ENCODE measurements at regions of chr12 and their contacts with region 1.

Region 1: DNA sequence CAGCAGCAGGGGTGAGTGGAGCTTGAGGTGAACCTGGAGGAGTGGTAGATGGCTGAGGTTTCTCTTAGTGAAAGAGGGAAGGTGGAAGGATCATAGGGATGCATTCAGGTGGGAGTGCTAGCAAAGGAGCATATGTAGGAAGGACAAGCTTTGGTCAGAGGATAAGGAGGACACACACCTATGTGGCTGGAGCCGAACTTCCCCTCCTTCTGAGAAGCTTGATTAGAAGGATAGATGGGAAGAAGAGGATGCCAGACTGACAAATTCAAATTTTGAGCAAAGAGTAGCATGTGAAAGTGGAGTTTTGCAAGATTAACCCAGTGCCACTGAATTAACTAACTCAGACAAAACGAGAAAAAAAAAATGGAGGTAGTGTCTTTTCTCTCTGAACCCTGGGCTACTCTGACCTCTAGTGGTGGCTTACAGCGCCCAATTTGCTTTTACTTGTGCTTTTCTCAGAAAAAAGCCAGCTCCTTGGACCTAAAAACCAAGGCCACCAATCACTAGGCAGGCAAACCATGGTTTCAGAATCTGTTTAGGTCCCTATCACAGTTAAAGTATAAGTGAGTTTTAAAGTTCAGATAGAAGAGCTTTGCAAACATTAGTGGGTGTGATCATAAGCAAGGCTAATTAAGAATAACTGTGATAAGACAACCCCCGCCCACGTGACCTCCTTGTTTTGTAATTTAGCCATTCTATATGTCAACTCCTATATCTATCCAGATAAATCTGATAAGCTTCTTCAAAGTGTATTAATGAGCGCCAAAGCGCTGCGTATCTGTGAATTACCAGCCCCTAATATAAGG is 15.5 kb downstream of the EMP1 start:
- DNase-seq: peak; percentile 84
- ATAC-seq: peak; percentile 72
- H3K4me3 Mint-ChIP-seq: no peak overlapping the region
- H3K27ac Mint-ChIP-seq: peak overlapping the region; percentile 60
- H3K4me1 Mint-ChIP-seq: peaks cover 55% of the 10 kb centered on the region
- H3K27me3 Mint-ChIP-seq: no peaks in the 10 kb centered on the region

Region 2: GRCh38 chr12:13044002-13044905 is 167.8 kb before region 1 on chr12 and contains the start of gene FAM234B:
- CTCF ChIA-PET with region 1: interaction called, 15 read pairs
- DNase-seq: peak; percentile 76
- ATAC-seq: peak; percentile 98
- H3K4me3 Mint-ChIP-seq: peak within 1 kb of the TSS; percentile 80
- H3K27ac Mint-ChIP-seq: peak within 1 kb of the TSS; percentile 31
- H3K4me1 Mint-ChIP-seq: peaks cover 23% of the 10 kb centered on the region
- H3K27me3 Mint-ChIP-seq: peaks cover 29% of the 10 kb centered on the region
- total RNA-seq, gene FAM234B: 4.7 to 5.0 TPM

Region 3: DNA sequence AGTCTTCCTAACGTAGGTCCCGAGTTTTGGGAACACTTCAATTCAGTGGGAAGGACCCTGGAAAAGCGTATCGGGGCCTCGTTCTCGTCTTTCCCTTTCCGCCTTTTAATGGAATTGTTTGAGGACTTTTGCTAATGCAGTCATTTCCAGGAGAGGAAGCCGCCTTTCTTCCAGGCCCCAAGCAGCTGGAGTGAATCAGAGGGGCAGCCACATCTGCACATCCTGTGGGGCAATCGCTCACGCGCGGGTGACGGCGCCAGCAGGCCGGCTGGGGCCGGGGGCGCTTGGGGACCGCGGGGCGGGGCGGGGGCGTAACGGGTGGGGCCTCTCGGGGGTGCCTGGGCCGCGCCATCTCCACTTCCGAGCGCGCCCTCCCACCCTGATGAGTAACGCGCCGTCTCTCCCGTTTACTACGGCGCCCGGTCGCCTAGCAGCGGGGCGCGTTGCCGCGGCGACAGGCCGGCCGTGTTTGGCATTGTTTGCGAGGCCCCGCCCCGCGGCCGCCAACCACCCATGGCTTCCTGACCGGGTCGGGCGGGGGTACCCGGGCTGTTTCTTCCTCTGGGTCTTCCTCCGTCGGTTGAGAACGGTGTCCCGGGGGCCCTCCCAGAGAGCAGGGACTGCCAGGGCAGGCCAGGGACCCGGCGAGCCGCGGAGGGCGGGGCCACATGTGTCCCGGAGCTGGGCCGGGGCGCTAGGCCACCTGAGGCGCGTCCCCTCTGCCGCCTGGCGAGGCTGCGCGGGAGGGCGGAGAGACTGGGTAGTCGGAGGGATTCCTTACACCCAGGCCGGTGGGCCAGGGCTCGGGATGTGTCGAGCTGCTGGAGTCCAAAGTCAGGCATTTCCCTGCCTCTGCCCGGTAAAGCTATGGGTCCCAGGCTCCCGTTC is 110.9 kb before region 1 on chr12:
- CTCF ChIA-PET with region 1: interaction called, 148 read pairs
- DNase-seq: peak; percentile 93
- ATAC-seq: peak; percentile 89
- H3K4me3 Mint-ChIP-seq: peak overlapping the region; percentile 66
- H3K27ac Mint-ChIP-seq: peak overlapping the region; percentile 80
- H3K4me1 Mint-ChIP-seq: peaks cover 51% of the 10 kb centered on the region
- H3K27me3 Mint-ChIP-seq: no peaks in the 10 kb centered on the region

Region 4: GRCh38 chr12:13179211-13180074 is 32.6 kb before region 1 on chr12:
- CTCF ChIA-PET with region 1: interaction called, 15 read pairs
- DNase-seq: peak; percentile 83
- ATAC-seq: peak; percentile 94
- H3K4me3 Mint-ChIP-seq: peak overlapping the region; percentile 46
- H3K27ac Mint-ChIP-seq: peak overlapping the region; percentile 35
- H3K4me1 Mint-ChIP-seq: peaks cover 35% of the 10 kb centered on the region
- H3K27me3 Mint-ChIP-seq: peaks cover 49% of the 10 kb centered on the region

Region 5: GRCh38 chr12:13223179-13223859 is 11.3 kb after region 1 on chr12:
- CTCF ChIA-PET with region 1: interaction called, 21 read pairs
- DNase-seq: no peak
- ATAC-seq: no peak
- H3K4me3 Mint-ChIP-seq: no peak overlapping the region
- H3K27ac Mint-ChIP-seq: no peak overlapping the region
- H3K4me1 Mint-ChIP-seq: no peaks in the 10 kb centered on the region
- H3K27me3 Mint-ChIP-seq: peaks cover 54% of the 10 kb centered on the region